HEK293 (cell line): ENCODE measurements at regions of chr3 and their contacts with region 1.

Region 1: DNA sequence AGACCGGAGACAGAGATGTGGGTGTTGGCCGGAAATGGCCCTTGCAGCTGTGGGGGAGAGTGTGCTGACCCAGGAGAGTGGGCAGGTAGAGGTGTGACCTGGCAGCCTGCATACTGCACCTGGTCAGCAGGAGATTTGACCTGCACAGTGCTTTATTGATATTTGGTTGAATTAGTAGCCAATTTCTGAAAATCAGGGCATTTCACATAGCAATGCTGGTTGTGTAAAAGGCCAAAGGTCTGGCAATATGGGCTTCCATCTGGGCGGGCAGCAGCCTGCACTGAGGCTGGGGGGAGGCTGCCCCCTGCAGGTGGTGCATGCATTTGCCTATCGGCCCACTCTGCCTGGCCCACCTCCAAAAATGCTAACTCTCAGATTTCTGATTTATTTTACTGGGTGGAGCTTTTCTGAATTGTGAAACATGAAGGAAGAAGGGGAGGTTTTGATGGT is 9.4 kb upstream of the MGLL start:
- H3K4me3 ChIP-seq: no peak overlapping the region
- H3K27ac ChIP-seq: no peak overlapping the region
- H3K4me1 ChIP-seq: no peaks in the 10 kb centered on the region
- CTCF ChIP-seq: no peak

Region 2: DNA sequence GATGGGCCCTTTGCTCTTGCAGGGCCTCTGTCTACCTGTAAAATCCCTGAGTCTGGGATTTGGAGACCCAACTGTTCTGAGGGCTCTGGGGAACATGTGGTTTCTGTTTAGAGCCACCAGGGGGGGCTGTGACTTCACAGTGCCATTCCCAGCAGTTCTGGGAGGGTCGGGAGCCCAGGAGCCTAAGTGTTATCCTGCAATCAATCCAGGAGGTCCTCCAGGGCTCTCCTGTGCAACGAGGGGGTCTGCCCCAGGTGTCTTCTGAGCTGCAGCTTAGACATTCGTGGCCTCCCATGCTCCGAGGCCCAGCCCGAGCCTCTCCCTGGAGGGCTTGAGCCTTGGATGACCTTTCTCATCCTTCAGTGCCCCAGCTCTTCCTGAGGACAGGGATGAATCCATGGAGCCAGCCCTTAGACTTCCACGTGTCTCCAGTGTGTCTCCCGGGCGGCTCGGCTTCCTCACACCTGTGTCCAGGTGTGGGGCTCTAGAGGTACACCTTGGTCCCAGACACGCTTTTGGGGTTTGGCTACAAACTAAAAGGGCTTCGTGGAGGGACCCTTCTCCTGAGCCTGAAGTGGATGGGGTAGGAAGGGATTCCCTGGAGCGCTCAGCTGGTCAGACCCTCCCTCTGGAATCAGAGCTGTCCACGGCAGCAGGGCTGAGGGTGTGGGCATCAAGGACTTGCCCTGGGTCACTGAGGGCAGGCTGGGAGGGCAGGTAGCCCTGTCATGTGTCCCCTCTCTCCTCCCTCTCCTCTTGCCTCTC is 179.3 kb before region 1 on chr3:
- CTCF ChIA-PET with region 1: interaction called, 14 read pairs
- POLR2A ChIA-PET with region 1: no interaction called
- H3K4me3 ChIP-seq: no peak overlapping the region
- H3K27ac ChIP-seq: no peak overlapping the region
- H3K4me1 ChIP-seq: no peaks in the 10 kb centered on the region
- CTCF ChIP-seq: peak; percentile 37

Region 3: GRCh38 chr3:127697551-127698240 is 134.1 kb before region 1 on chr3:
- CTCF ChIA-PET with region 1: interaction called, 31 read pairs
- POLR2A ChIA-PET with region 1: no interaction called
- H3K4me3 ChIP-seq: no peak overlapping the region
- H3K27ac ChIP-seq: no peak overlapping the region; the same call in 1 of the 2 replicates
- H3K4me1 ChIP-seq: no peaks in the 10 kb centered on the region
- CTCF ChIP-seq: no peak

Region 4: DNA sequence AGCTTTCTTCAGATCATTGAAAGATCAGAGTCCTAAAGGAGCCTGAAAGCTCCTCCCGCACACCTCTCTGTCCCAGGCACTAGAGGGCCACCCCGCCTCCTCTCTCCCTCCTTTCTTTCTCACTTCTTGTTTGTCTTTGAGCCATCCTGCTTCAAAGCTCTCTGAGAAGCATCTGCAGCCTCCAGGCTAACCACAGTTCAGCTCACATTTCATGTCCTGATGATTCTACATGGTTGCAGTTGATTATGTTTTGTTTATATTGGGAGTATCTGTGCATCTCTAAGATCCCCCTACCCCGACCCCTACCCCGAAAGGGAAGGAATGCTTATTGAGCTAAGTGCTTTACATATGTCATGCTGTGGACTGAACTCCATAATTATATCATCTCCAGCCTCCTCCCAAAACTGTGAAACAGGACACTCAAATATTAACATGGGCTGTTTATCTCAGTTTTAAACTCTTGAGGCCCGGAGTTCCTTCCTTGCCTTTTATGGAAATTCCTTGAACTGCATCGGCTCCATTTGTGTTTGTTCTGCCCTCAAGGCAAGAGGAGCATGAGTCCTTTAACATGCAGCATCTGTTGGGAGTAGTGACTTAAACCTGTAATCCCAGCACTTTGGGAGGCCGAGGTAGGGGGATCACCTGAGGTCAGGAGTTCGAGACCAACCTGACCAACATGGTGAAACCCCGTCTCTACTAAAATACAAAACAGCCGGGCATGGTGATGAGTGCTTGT is 40.4 kb before region 1 on chr3:
- CTCF ChIA-PET with region 1: interaction called, 19 read pairs
- POLR2A ChIA-PET with region 1: no interaction called
- H3K4me3 ChIP-seq: no peak overlapping the region
- H3K27ac ChIP-seq: peak overlapping the region; percentile 43
- H3K4me1 ChIP-seq: 0 out of 2 replicates have a peak, but pooled peaks cover 3% of the 10 kb centered on the region
- CTCF ChIP-seq: 0 out of 2 replicates have a peak, but pooled peaks have one; percentile 21